ENCODE measurements at regions of chr10 and their contacts with region 1.

Region 1: GRCh38 chr10:52644373-52645186 is 128.0 kb downstream of the MBL2 start:
- DNase-seq: no peak
- ATAC-seq: no peak
- H3K4me3 Mint-ChIP-seq: no peak overlapping the region
- H3K27ac Mint-ChIP-seq: no peak overlapping the region
- H3K4me1 Mint-ChIP-seq: no peaks in the 10 kb centered on the region
- H3K27me3 Mint-ChIP-seq: no peaks in the 10 kb centered on the region
- CTCF ChIP-seq: no peak

Region 2: DNA sequence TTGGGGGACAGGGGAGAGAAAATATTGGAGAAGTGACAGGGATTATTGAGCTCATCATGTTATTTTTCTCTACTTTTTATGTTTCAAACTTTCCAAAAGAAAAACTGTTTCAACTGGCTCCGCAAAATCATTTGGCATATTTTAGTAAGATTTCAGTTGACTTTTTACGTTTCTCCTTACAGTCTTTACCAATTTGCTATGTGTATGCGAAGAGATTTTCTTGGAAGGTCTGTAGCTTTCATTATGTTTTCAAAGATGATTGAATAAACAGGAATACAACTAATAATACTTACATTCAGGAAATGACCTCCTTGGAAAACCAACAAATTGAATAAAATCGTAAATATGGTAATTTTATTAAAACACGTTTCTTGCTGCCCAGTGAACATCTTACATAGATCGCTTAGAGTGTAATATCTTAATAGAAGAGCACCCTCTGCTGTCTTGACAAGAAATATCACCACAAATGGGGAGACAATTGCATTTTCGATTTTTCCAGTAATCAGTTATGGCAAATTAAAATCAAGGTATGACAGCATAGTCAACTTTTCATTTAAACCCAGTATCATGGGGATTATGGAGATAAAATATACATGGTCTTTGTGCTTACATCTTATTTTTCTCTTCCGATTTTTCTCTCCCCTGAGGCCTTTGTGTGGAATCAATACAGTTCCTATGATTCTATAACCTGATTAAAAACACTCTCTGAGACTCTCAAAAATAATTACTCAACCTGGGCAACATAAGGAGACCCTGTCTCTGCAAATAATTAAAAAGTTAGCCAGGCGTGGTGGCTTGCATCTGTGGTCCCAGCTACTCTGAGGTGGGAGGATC is 84.9 kb after region 1 on chr10:
- CTCF ChIA-PET with region 1: interaction called, 5 read pairs
- POLR2A ChIA-PET with region 1: no interaction called
- intact Hi-C with region 1: loop called (anchors 1 kb)
- DNase-seq: no peak
- ATAC-seq: no peak
- H3K4me3 Mint-ChIP-seq: no peak overlapping the region
- H3K27ac Mint-ChIP-seq: no peak overlapping the region
- H3K4me1 Mint-ChIP-seq: no peaks in the 10 kb centered on the region
- H3K27me3 Mint-ChIP-seq: no peaks in the 10 kb centered on the region
- CTCF ChIP-seq: no peak

Region 3: DNA sequence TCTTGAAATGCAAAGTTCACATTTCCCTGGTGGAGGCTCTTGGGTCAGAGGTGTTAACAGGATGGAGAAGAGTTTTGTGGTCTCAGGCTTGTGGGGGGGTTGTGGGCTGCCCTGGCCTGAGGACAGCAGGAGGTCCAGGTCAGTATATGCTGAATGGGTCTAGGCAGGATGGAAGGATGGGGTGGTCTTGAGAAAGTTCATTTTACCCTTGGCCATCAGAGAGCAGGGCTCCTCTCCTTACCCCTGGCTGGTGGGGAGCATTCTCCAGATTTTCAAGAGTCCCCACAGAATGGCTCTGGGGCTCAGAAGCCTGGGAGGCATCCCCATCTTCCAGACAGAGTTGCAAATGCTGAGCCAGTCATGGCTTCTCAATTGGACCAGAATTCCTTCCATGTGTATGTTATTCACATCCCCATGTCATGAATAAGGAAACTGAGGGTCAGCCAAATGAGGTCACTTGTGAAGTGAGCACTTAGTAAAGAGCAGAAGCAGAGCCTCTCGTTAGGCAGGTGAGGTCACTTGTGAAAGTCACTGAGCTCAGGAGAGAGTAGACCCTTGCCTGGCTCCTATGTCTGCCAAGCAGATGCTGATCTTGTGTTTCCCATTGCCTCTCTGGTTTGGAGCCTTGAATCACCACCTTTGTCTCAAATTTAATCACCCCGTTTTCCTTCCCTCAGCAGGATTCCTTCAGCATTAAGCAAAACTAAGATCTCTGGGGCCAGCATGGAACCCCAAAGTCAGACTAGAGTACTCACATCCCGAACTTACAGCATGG is 95.0 kb after region 1 on chr10:
- CTCF ChIA-PET with region 1: no interaction called
- POLR2A ChIA-PET with region 1: no interaction called
- intact Hi-C with region 1: no loop called
- DNase-seq: no peak
- ATAC-seq: no peak
- H3K4me3 Mint-ChIP-seq: no peak overlapping the region
- H3K27ac Mint-ChIP-seq: no peak overlapping the region
- H3K4me1 Mint-ChIP-seq: no peaks in the 10 kb centered on the region
- H3K27me3 Mint-ChIP-seq: no peaks in the 10 kb centered on the region
- CTCF ChIP-seq: no peak

Region 4: DNA sequence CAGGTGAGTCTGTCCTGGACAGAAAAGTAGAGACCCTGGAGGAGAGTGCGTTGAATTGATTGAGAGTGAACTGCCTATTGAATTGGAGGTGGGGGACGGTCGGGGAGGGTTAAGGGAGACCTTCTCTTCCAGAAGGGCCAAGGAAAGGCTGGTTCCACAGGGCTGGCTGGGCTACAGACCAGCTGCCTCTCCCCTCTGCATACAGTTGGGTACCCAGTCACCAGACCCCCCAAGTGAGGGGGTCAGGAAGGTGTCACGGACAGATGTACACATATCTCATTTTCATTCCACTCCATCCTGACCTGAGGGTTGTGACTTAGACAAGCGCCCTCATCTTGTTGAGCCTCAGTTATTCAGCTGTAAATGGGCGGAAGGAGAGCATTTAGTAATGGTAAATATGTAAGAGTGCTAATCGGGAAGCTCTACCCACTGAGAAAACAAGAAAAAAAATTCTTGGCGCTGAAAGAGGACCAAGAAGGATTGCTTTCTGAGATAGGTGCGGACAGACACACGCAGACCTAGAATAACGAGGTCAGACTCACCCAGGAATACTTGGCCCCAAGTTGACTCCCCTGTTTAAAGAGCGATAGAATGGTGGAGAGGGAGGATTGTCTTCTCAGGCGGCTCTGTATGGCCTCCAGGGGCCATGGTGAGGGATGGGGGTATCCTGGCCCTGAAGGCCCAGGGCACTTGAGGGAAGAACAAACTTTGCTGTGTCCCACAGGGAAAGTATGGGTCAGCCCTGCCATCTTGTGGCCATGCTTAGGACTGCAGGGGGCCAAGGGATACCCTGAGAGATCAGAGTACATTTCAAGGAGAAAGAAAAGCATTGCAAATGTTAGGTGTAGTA is 135.2 kb after region 1 on chr10:
- CTCF ChIA-PET with region 1: interaction called, 3 read pairs
- POLR2A ChIA-PET with region 1: no interaction called
- intact Hi-C with region 1: loop called (anchors 1 kb)
- DNase-seq: no peak
- ATAC-seq: peak; percentile 28
- H3K4me3 Mint-ChIP-seq: no peak overlapping the region
- H3K27ac Mint-ChIP-seq: no peak overlapping the region
- H3K4me1 Mint-ChIP-seq: no peaks in the 10 kb centered on the region
- H3K27me3 Mint-ChIP-seq: no peaks in the 10 kb centered on the region
- CTCF ChIP-seq: no peak